Activated CD4-positive, alpha-beta memory T cell treated with anti-CD3 and anti-CD28 coated beads, Interleukin-2, amount 10 ng/mL, durations not matched to agents 7 days and 5 days (primary cell): ENCODE measurements at regions of chr9 and their contacts with region 1.

Region 1: DNA sequence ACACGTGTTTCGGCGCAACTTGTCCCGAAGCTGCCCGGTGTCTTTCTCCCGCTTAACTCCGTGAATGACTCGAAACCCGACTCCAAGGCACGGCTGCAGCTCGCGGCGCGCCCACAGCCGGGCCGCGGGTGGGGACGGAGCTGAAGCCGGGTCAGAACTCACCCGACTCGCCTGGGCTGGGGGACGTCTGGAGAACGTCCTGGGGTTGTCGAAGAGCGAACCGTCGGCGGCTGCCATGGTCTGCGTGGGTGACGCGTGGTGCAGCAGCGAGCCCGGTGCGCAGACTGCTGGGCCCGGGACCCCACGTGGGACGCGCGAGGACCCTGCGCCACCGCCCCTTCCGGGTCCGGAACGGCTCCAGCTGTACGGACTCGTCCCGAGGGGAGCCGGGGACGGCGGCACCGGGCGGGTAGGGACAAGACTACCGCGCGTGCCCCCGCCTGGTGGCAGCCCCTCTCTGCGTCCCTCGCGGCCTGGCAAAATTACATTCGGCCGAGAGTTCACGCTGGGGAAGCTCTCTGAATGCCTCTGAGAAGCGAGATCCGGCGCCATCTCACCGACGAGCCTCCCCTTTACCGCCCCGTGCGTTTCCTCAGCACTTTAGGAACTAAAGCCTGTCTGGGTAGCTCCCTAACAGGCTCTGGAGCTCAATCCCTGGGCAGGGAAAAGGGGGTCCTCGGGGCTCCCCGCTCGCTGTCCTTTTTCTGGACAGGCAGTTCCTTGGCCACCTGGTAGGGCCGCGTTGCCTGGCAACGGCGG is at the start of gene DDX31:
- DNase-seq: peak; percentile 87
- H3K4me3 Mint-ChIP-seq: peak within 1 kb of the TSS; percentile 83
- H3K27ac Mint-ChIP-seq: peak within 1 kb of the TSS; percentile 85
- H3K4me1 Mint-ChIP-seq: peaks cover 43% of the 10 kb centered on the region
- H3K27me3 Mint-ChIP-seq: no peaks in the 10 kb centered on the region
- total RNA-seq, gene DDX31: 10.2 to 10.5 TPM

Region 2: GRCh38 chr9:132406554-132407122 is 263.2 kb before region 1 on chr9 and contains the start of gene TTF1:
- CTCF ChIA-PET with region 1: interaction called, 3 read pairs
- POLR2A ChIA-PET with region 1: interaction called, 12 read pairs
- DNase-seq: peak; percentile 95
- H3K4me3 Mint-ChIP-seq: peak within 1 kb of the TSS; percentile 88
- H3K27ac Mint-ChIP-seq: peak within 1 kb of the TSS; percentile 95
- H3K4me1 Mint-ChIP-seq: peaks cover 57% of the 10 kb centered on the region
- H3K27me3 Mint-ChIP-seq: peaks cover 22% of the 10 kb centered on the region
- total RNA-seq, gene TTF1: 24.5 to 26.1 TPM

Region 3: GRCh38 chr9:132679946-132680625 is 10.2 kb after region 1 on chr9:
- CTCF ChIA-PET with region 1: interaction called, 5 read pairs
- POLR2A ChIA-PET with region 1: interaction called, 33 read pairs
- DNase-seq: no peak
- H3K4me3 Mint-ChIP-seq: no peak overlapping the region
- H3K27ac Mint-ChIP-seq: peak overlapping the region; percentile 67
- H3K4me1 Mint-ChIP-seq: peaks cover 54% of the 10 kb centered on the region
- H3K27me3 Mint-ChIP-seq: no peaks in the 10 kb centered on the region

Region 4: GRCh38 chr9:132694157-132694556 is 24.3 kb after region 1 on chr9:
- CTCF ChIA-PET with region 1: interaction called, 5 read pairs
- POLR2A ChIA-PET with region 1: interaction called, 13 read pairs
- DNase-seq: peak; percentile 19
- H3K4me3 Mint-ChIP-seq: no peak overlapping the region
- H3K27ac Mint-ChIP-seq: no peak overlapping the region
- H3K4me1 Mint-ChIP-seq: peaks cover 4% of the 10 kb centered on the region
- H3K27me3 Mint-ChIP-seq: peaks cover 2% of the 10 kb centered on the region

Region 5: GRCh38 chr9:132768932-132769905 is 99.3 kb after region 1 on chr9:
- CTCF ChIA-PET with region 1: interaction called, 4 read pairs
- POLR2A ChIA-PET with region 1: interaction called, 28 read pairs
- DNase-seq: peak; percentile 71
- H3K4me3 Mint-ChIP-seq: peak overlapping the region; percentile 97
- H3K27ac Mint-ChIP-seq: peak overlapping the region; percentile 93
- H3K4me1 Mint-ChIP-seq: peaks cover 22% of the 10 kb centered on the region
- H3K27me3 Mint-ChIP-seq: peaks cover 9% of the 10 kb centered on the region